ENCODE measurements at regions of chr4 and their contacts with region 1.

Region 1: GRCh38 chr4:173168396-173169177 is at the start of gene GALNT7:
- DNase-seq: peak; percentile 45
- H3K4me3 Mint-ChIP-seq: peak within 1 kb of the TSS; percentile 90
- H3K27ac Mint-ChIP-seq: peak within 1 kb of the TSS; percentile 92
- H3K4me1 Mint-ChIP-seq: peaks cover 35% of the 10 kb centered on the region
- H3K27me3 Mint-ChIP-seq: no peaks in the 10 kb centered on the region
- total RNA-seq, gene GALNT7: 24.6 and 30.5 TPM in 2 replicates

Region 2: GRCh38 chr4:173191623-173192041 is 23.0 kb after region 1 on chr4:
- intact Hi-C with region 1: loop called (anchors 2 kb)
- DNase-seq: no peak
- H3K4me3 Mint-ChIP-seq: no peak overlapping the region
- H3K27ac Mint-ChIP-seq: peak overlapping the region; percentile 63
- H3K4me1 Mint-ChIP-seq: peaks cover 30% of the 10 kb centered on the region
- H3K27me3 Mint-ChIP-seq: peaks cover 2% of the 10 kb centered on the region

Region 3: DNA sequence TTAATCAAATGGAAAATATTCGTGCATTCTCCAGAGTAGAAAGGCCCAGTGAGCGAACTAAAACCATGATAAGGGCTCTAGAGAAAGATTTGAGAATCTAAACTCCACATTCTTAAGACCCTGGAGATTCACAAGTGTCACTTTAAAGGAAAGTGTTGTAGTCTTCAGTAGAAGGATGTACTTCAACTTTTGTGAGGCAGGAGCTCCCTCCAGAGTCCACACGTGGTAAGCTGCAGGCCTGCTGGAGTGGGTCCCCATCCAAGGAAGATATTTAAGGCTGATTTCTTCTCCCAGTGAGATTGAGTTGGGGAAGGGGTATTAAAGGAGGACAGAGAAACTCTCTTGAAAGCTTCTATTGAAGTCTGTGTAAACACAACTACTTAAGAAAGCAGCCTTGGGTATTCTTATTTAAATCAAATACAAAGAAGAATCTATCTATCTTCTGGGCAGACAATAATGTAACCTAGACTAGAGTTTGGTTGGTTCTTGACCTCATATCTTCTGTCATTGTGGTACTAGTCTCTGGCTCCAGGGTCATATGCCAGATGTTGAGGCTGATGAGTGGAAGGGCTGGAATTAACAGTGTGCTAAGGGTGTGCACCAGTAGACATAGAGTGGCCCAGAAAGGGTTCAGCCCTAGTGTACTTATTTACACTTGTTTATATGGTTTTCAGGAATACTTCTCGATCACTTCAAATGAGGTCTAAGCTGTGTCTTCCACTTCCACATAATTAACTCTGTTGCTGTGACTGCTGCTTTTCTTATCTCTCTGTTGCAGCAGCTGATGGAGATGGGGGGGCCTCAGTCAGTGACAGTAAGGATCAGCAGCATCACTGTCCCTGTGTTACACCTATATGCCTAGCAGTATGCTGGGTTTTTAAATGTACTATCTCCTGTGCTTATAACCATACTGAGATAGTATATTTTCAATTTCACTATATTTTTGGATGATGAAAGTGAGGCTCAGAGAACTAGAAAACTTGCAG is 89.4 kb after region 1 on chr4:
- intact Hi-C with region 1: loop called (anchors 2 kb)
- DNase-seq: peak; percentile 34
- H3K4me3 Mint-ChIP-seq: no peak overlapping the region
- H3K27ac Mint-ChIP-seq: no peak overlapping the region
- H3K4me1 Mint-ChIP-seq: no peaks in the 10 kb centered on the region
- H3K27me3 Mint-ChIP-seq: peaks cover 3% of the 10 kb centered on the region

Region 4: GRCh38 chr4:173370477-173371291 is 202.1 kb after region 1 on chr4 and contains the start of gene SAP30:
- intact Hi-C with region 1: loop called (anchors 1 kb)
- DNase-seq: peak; percentile 92
- H3K4me3 Mint-ChIP-seq: peak within 1 kb of the TSS; percentile 100
- H3K27ac Mint-ChIP-seq: peak within 1 kb of the TSS; percentile 99
- H3K4me1 Mint-ChIP-seq: peaks cover 61% of the 10 kb centered on the region
- H3K27me3 Mint-ChIP-seq: no peaks in the 10 kb centered on the region
- total RNA-seq, gene SAP30: 29.3 and 30.9 TPM in 2 replicates

Region 5: DNA sequence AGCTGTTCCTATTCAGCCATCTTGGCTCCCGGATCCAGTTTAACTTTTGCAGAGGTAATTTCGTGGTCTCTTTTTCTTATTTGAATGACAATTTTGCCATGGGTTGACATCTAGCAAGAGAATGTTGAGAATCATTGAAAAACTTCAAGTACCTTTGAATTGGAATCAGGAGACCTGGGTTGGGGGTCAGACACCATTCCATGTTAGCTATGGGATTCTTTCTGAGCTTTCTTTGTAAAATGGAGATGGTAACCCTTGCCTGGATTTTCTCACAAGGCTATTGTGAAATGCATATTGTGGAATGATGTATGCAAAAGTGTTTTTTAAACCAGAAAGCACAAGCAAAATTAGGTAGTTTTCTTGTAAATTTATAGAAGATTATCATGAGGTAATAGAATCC is 440.6 kb after region 1 on chr4:
- intact Hi-C with region 1: no loop called
- DNase-seq: no peak
- H3K4me3 Mint-ChIP-seq: no peak overlapping the region
- H3K27ac Mint-ChIP-seq: no peak overlapping the region
- H3K4me1 Mint-ChIP-seq: no peaks in the 10 kb centered on the region
- H3K27me3 Mint-ChIP-seq: no peaks in the 10 kb centered on the region

Measured in activated T-helper 1 cell treated with anti-CD3 and anti-CD28 coated beads, Interleukin-12 subunit alpha, Interleukin-12 subunit beta, Interleukin-2, Interleukin-4 antibody, amounts not matched to agents 30 ng/mL and 10 ng/mL and 1 ng/mL, durations not matched to agents 14 hours and 24 hours and 36 hours (primary cell).